ENCODE measurements at regions of chr15 and their contacts with region 1.

Region 1: DNA sequence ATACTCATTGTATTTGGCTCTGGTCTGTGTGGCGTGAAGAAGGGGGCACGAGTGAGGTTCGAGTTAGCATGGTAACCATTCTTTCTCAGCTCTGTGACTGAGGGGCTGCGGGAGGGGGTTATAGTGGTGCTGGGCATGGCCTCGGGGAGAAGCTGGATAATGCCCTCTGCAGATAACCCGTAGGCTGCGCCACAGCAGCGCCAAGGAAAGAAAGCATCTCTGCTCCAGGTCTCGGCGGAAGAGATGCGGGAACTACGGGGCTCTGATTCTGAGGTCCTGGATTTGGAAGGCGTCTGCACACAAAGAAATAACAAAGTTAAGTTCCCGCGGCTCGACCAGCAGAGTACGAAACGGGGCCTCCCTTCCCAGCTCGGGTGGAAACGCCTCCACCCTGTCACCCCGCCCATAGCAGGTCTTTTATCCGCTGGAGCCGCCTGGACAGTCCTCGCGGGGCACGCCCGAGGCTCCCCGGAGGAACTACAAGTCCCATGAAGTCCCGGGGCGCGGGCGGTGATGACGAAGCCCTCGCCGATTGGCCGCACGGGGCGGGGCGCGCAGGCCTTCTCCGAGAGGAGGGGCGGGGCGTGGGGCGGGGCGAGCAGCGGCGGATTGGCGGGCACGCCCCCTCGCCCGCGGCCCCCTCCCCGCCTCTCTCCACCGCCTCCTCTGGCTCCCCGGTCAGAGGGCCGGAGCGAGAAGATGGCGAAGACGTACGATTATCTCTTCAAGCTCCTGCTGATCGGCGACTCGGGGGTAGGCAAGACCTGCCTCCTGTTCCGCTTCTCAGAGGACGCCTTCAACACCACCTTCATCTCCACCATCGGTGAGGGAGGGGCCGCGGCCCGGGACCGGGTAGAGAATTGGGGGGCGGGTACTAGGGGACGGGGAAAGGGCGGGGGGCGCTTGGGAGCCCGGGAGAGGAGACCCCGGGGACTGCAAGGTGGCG is at the start of gene RAB8B:
- DNase-seq: peak; percentile 98 to 100 (median 99)
- ATAC-seq: peak; percentile 98 to 100 (median 99)
- H3K4me3 ChIP-seq: peak within 1 kb of the TSS; percentile 51 to 88 (median 73)
- H3K27ac ChIP-seq: peak within 1 kb of the TSS; percentile 19 to 90 (median 77)
- H3K4me1 ChIP-seq: peaks cover 0 to 47% (median 15%) of the 10 kb centered on the region in 12 donors
- H3K27me3 ChIP-seq: no peaks in the 10 kb centered on the region
- CTCF ChIP-seq: peak in 2 of 12 donors; percentile 2 to 6
- POLR2A ChIP-seq: peak; percentile 42 to 73
- total RNA-seq, gene RAB8B: 6.3 to 32.6 (median 8.4) TPM

Region 2: DNA sequence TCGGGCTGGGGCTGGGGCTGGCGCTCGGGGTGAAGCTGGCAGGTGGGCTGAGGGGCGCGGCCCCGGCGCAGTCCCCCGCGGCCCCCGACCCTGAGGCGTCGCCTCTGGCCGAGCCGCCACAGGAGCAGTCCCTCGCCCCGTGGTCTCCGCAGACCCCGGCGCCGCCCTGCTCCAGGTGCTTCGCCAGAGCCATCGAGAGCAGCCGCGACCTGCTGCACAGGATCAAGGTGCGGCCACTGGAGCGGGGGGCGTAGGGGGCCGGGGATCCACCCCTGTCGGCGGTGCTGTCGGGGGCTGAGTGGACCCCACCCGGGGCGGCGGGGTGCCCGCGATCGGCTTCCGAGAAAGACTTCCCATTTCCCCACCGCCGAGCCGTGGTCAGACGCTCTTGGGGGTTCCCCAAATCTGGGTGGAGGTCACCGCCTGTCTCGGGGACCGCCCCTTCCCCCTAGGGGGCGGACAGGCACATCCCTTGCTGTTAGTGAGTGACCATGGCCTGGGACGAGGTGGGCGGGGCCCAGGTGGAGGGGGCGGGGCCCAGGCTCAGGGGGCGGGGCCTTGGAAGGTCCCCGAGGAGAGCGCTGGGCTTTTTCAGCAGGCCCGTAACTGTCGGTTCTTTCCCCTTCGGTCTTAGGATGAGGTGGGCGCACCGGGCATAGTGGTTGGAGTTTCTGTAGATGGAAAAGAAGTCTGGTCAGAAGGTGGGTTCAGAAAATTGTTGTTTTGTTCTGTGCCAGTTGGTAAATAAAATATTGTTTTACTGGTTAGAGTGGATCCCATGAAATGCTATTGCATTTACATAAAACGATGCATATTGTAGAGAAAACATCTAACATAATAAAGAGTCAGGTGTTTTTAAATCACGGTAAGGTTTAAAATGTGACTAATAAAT is 67.0 kb before region 1 on chr15:
- intact Hi-C with region 1: loop called in 1 of 10 experiments (anchors 5 kb)
- DNase-seq: peak; percentile 82 to 92 (median 85)
- ATAC-seq: peak; percentile 96 to 98 (median 97)
- H3K4me3 ChIP-seq: peak overlapping the region; percentile 72 to 99 (median 95)
- H3K27ac ChIP-seq: peak overlapping the region; percentile 88 to 97 (median 94)
- H3K4me1 ChIP-seq: peaks cover 0 to 15% (median 7%) of the 10 kb centered on the region in 12 donors
- H3K27me3 ChIP-seq: no peaks in the 10 kb centered on the region
- CTCF ChIP-seq: peak in 10 of 12 donors; percentile 6 to 49 (median 23)
- POLR2A ChIP-seq: no peak

Region 3: DNA sequence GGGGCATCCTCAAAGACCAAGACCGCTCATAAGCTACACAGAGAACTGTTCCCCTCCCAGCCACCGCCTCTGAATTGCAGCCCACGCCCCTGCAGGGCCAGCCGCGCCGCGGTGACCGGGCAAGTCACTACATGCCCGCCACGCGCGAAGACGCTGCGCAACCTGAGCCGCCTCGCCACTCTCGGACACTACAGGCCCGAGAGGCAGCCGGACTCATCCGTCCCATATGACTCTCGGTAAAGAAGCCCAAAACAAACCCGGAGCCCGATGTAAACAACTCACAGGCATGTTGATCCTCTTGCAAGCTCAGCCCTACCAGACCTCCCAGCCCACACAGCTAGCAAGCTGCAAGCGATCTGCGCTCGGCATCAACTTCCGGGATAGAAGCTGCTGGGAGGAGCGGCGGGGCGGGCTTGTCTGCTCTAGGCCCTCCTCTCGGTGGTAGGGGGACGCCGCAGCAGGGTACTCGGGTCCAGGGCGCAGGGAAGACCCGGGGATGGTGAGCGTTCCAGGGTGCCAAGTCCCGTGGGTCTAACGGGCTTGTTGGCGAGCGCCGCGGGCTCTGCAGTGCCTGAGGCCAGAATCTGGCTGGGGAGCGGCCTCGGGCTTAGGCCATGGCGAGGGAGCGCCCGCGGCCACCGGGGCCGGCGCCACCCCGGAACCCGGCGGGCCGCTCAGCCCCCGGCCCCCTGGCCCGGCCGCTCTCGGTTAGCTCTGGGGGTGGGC is 31.9 kb before region 1 on chr15 and contains the start of gene RPS27L:
- intact Hi-C with region 1: loop called in 2 of 10 experiments (anchors 2 kb)
- DNase-seq: peak; percentile 92 to 95 (median 94)
- ATAC-seq: peak; percentile 89 to 98 (median 98)
- H3K4me3 ChIP-seq: peak within 1 kb of the TSS; percentile 65 to 97 (median 84)
- H3K27ac ChIP-seq: peak within 1 kb of the TSS; percentile 91 to 99 (median 96)
- H3K4me1 ChIP-seq: peaks cover 0 to 31% (median 21%) of the 10 kb centered on the region in 12 donors
- H3K27me3 ChIP-seq: no peaks in the 10 kb centered on the region
- CTCF ChIP-seq: peak in 2 of 12 donors; percentile 8 to 19
- POLR2A ChIP-seq: peak in 1 of 2 donors; percentile 74
- total RNA-seq, gene RPS27L: 61.3 to 221 (median 137) TPM

Region 4: DNA sequence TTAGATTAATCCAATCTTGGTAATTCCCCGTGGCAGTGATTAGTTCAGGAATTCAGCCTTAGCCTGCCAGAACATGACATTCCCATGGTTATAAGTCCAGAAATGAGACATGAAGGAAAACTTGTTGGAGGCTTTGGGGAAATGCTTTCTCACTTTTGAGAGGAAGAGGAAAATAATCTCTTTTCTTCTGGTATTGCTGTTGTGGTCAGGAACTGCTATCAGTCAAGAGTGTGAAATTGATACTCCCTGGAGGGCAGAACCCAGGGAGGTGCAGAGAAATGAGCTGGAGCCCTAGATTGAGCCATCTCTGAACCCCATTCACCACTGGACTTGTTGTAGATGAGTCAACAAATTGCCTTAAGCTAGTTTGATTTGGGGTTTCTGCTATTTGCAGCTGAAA is 49.6 kb after region 1 on chr15:
- intact Hi-C with region 1: loop called in 3 of 10 experiments (anchors 5 kb)
- DNase-seq: no peak
- ATAC-seq: peak in 1 of 4 donors; percentile 51
- H3K4me3 ChIP-seq: no peak overlapping the region
- H3K27ac ChIP-seq: peak overlapping the region in 3 of 12 donors; percentile 1 to 24 (median 5)
- H3K4me1 ChIP-seq: peaks cover 2 to 69% (median 26%) of the 10 kb centered on the region in 12 donors
- H3K27me3 ChIP-seq: no peaks in the 10 kb centered on the region
- CTCF ChIP-seq: no peak
- POLR2A ChIP-seq: no peak

Region 5: GRCh38 chr15:63277038-63277892 is 88.1 kb after region 1 on chr15 and contains the start of gene APH1B:
- intact Hi-C with region 1: loop called in 7 of 10 experiments (anchors 2 to 10 kb)
- DNase-seq: peak; percentile 87 to 92 (median 89)
- ATAC-seq: peak; percentile 78 to 97 (median 92)
- H3K4me3 ChIP-seq: peak within 1 kb of the TSS; percentile 61 to 94 (median 88)
- H3K27ac ChIP-seq: peak within 1 kb of the TSS; percentile 25 to 89 (median 83)
- H3K4me1 ChIP-seq: peaks cover 0 to 23% (median 6%) of the 10 kb centered on the region in 12 donors
- H3K27me3 ChIP-seq: no peaks in the 10 kb centered on the region
- CTCF ChIP-seq: no peak
- POLR2A ChIP-seq: peak in 1 of 2 donors; percentile 53
- total RNA-seq, gene APH1B: 4.3 to 17.6 (median 6.3) TPM

Region 6: DNA sequence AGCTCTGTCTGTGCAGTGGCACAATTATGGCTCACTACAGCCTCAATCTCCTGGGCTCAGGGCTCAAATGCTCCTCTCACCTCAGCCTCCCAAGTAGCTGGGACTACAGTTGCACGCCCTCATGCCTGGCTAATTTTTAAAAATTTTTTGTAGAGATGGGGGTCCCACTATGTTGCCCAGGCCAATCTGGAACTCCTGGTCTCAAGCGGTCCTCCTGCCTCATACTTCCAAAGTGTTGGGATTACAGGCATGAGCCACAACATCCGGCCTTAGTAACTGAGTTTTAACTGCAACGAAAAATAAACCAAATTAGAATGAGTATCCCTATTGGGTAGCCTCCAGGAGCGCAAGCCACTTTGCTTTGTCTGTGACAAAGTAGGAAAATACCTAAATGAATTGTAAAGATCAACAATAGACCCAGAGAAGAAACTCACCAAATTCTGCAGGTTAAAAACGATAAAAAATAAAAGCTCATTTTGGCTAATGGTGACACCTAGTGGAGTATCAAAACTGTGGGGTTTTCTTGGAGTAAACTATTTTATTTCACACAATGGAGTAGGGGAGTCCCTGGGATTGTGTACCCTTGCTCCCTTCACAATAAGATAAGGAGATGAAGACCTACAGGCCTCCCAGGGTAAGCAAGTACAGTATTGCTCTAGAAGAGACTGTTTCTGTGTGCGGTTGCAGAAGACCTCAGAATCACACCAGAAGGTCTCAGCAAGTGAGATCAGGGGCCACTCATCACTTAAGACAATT is 213.5 kb after region 1 on chr15:
- intact Hi-C with region 1: loop called in 2 of 10 experiments (anchors 10 kb)
- DNase-seq: no peak
- ATAC-seq: peak; percentile 26 to 47 (median 33)
- H3K4me3 ChIP-seq: no peak overlapping the region
- H3K27ac ChIP-seq: no peak overlapping the region
- H3K4me1 ChIP-seq: peaks cover 0 to 13% (median 0%) of the 10 kb centered on the region in 12 donors
- H3K27me3 ChIP-seq: no peaks in the 10 kb centered on the region
- CTCF ChIP-seq: peak; percentile 51 to 78 (median 68)
- POLR2A ChIP-seq: no peak

Measured in heart left ventricle (tissue), 16 donors.